Naive thymus-derived CD8-positive, alpha-beta T cell (primary cell): ENCODE measurements at regions of chrX and their contacts with region 1.

Region 1: GRCh38 chrX:136880452-136881013 is at the start of gene RBMX:
- DNase-seq: peak; percentile 73 to 96 (median 90)
- ATAC-seq: peak; percentile 84 to 87
- H3K4me3 Mint-ChIP-seq: peak within 1 kb of the TSS; percentile 87 to 99 (median 96)
- H3K27ac Mint-ChIP-seq: peak within 1 kb of the TSS; percentile 98 to 99 (median 99)
- H3K4me1 Mint-ChIP-seq: peaks cover 0 to 31% (median 10%) of the 10 kb centered on the region in 4 donors
- H3K27me3 Mint-ChIP-seq: no peaks in the 10 kb centered on the region
- polyA plus RNA-seq, gene RBMX: 160 to 207 (median 169) TPM

Region 2: DNA sequence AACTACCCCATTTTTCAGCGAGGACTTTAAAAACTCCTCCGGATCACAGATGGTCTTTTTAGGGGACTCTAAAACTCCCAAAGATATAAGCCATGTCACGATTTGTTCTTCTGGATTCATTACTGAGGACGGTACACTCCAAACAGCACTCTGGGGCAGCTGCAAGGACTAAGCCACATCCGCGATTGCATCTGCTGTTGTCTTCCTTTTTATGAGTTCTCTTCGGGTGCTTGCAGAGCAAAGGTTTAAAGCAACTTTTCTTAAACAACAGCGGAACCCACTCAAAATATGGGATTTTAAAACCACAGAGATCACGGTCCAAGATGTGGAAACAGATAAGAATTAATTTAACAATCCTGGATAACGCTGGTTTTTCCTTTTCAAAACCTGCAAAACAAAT is 99.8 kb before region 1 on chrX and contains the start of gene ARHGEF6:
- POLR2A ChIA-PET with region 1: interaction called, 38 read pairs
- DNase-seq: peak in 4 of 10 donors; percentile 10 to 48 (median 32)
- ATAC-seq: peak; percentile 75
- H3K4me3 Mint-ChIP-seq: peak within 1 kb of the TSS; percentile 89 to 96 (median 94)
- H3K27ac Mint-ChIP-seq: peak within 1 kb of the TSS; percentile 88 to 100 (median 94)
- H3K4me1 Mint-ChIP-seq: peaks cover 25 to 69% (median 60%) of the 10 kb centered on the region in 4 donors
- H3K27me3 Mint-ChIP-seq: no peaks in the 10 kb centered on the region
- polyA plus RNA-seq, gene ARHGEF6: 69.8 to 76.4 (median 75.4) TPM

Region 3: GRCh38 chrX:136870064-136870463 is 10.5 kb before region 1 on chrX:
- POLR2A ChIA-PET with region 1: interaction called, 22 read pairs
- DNase-seq: no peak
- ATAC-seq: no peak
- H3K4me3 Mint-ChIP-seq: peak overlapping the region in 2 of 10 donors; percentile 11 to 41
- H3K27ac Mint-ChIP-seq: peak overlapping the region in 3 of 10 donors; percentile 4 to 62 (median 52)
- H3K4me1 Mint-ChIP-seq: peaks cover 7 to 50% (median 25%) of the 10 kb centered on the region in 4 donors
- H3K27me3 Mint-ChIP-seq: no peaks in the 10 kb centered on the region

Region 4: DNA sequence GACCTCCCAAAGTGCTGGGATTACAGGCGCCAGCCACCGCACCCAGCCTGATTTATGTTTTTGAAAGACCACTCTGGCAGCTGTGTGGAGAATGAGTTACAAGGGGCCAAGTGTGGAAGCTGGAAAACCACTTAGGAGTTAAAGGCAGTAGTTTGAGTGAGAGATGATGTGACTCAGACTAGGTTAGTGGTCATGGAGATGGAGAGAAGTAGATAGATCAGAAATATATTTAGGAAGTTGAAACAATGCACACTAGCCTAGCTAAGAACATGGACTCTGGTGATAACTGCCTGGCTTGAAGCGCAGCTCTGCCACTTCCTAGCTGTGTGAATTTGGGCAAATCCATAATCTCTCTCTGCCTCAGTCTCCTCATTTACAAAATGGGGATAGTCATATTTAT is 11.9 kb after region 1 on chrX:
- POLR2A ChIA-PET with region 1: interaction called, 10 read pairs
- DNase-seq: no peak
- ATAC-seq: no peak
- H3K4me3 Mint-ChIP-seq: no peak overlapping the region
- H3K27ac Mint-ChIP-seq: no peak overlapping the region
- H3K4me1 Mint-ChIP-seq: no peaks in the 10 kb centered on the region
- H3K27me3 Mint-ChIP-seq: no peaks in the 10 kb centered on the region

Region 5: GRCh38 chrX:136909706-136910564 is 29.4 kb after region 1 on chrX:
- POLR2A ChIA-PET with region 1: interaction called, 11 read pairs
- DNase-seq: peak; percentile 17 to 76 (median 46)
- ATAC-seq: peak; percentile 55 to 67
- H3K4me3 Mint-ChIP-seq: peak overlapping the region; percentile 87 to 98 (median 94)
- H3K27ac Mint-ChIP-seq: peak overlapping the region; percentile 75 to 96 (median 90)
- H3K4me1 Mint-ChIP-seq: peaks cover 10 to 21% (median 15%) of the 10 kb centered on the region in 4 donors
- H3K27me3 Mint-ChIP-seq: no peaks in the 10 kb centered on the region